Panc1 (cell line): ENCODE measurements at regions of chr2 and their contacts with region 1.

Region 1: DNA sequence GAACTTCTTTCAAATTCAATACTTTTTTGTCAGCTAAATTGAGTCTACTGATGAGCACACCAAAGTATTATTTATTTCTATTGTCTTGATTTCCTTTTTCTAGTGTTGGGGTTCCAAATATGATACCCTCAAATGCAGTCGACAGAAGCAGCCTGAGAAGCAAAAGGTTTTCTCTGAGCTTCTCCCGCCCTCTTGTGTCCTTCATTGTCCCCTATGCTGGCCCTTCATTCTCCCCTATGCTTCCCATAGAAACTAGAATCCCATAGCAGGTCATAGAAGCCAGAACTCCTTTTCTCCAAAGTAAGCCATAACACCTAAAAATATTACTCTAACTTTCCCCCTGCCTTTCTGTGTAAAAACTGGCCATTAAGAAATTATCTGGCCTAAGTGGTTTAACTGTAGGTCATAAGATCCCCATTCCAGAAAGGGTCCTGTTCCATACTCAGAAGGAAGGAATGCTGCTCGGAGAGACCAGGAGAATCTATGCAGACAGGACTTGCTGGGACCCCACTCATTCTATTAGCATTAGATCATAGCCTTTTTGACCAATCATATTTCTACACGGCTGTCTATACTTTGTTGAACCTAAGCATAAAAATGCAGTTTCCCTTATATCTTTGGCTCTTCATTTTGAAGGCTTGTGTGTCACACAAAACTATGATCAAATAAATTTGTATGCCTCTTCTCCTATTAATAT is 764.6 kb upstream of the PKDCC start:
- DNase-seq: no peak
- ATAC-seq: no peak
- H3K4me3 ChIP-seq: no peak overlapping the region
- H3K27ac ChIP-seq: no peak overlapping the region
- H3K4me1 ChIP-seq: no peaks in the 10 kb centered on the region
- H3K27me3 ChIP-seq: no peaks in the 10 kb centered on the region
- CTCF ChIP-seq: peak; percentile 17; the same call in 1 of the 2 replicates

Region 2: GRCh38 chr2:40144022-40144421 is 1139.2 kb before region 1 on chr2:
- CTCF ChIA-PET with region 1: no interaction called
- POLR2A ChIA-PET with region 1: no interaction called
- in situ Hi-C with region 1: no loop called
- intact Hi-C with region 1: loop called (anchors 5 kb)
- DNase-seq: no peak
- ATAC-seq: no peak
- H3K4me3 ChIP-seq: no peak overlapping the region
- H3K27ac ChIP-seq: no peak overlapping the region
- H3K4me1 ChIP-seq: no peaks in the 10 kb centered on the region
- H3K27me3 ChIP-seq: no peaks in the 10 kb centered on the region
- CTCF ChIP-seq: no peak

Region 3: GRCh38 chr2:40760071-40760666 is 523.1 kb before region 1 on chr2:
- CTCF ChIA-PET with region 1: no interaction called
- POLR2A ChIA-PET with region 1: no interaction called
- in situ Hi-C with region 1: no loop called
- intact Hi-C with region 1: no loop called
- DNase-seq: peak; percentile 36
- ATAC-seq: peak; percentile 87
- H3K4me3 ChIP-seq: no peak overlapping the region
- H3K27ac ChIP-seq: no peak overlapping the region
- H3K4me1 ChIP-seq: no peaks in the 10 kb centered on the region
- H3K27me3 ChIP-seq: no peaks in the 10 kb centered on the region
- CTCF ChIP-seq: peak; percentile 89